ENCODE measurements at regions of chr7 and their contacts with region 1.

Region 1: DNA sequence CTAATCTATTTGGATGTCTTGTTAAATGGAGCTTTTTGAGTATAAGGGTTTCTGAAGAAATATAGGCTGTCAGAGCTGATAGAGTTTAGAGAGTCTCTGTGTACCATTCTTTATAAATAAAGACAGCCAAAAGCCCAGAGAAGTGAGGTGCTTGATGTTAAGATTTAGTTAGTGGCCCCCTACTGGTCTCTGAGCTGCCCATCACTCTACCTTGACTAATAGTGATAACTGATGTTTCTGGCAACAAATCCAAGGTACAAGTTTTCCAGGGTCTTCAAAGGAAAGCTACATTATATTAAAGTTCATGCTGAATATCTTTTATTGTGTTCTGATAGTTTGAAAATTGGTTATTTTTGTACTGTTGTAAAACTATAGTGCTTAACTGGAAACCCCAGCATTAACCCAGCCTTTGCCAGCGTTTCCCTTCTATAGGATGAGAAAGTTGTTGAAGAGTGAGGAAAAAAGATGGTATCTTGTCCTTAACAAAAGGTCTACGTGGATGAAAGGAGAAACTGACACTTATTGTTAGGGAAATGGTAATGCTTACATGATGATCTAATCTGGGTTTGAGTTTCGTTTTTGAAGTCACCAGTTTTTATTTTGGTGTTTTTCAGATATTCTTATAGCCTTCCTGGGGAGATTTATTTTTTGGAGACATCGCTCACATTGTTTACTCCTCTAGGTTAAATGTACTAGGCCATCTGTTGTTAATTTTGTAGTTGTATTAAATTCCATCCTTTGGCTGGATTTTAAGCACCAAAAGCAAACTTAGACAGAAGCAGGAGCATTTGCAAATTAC is 79.0 kb downstream of the AUTS2 start:
- DNase-seq: no peak
- H3K4me3 ChIP-seq: no peak overlapping the region
- CTCF ChIP-seq: peak; percentile 26

Region 2: GRCh38 chr7:69663911-69664832 is 13.1 kb before region 1 on chr7:
- CTCF ChIA-PET with region 1: interaction called, 10 read pairs
- POLR2A ChIA-PET with region 1: no interaction called
- DNase-seq: no peak
- H3K4me3 ChIP-seq: no peak overlapping the region
- CTCF ChIP-seq: no peak